Heart left ventricle (tissue), 16 donors: ENCODE measurements at regions of chr2 and their contacts with region 1.

Region 1: DNA sequence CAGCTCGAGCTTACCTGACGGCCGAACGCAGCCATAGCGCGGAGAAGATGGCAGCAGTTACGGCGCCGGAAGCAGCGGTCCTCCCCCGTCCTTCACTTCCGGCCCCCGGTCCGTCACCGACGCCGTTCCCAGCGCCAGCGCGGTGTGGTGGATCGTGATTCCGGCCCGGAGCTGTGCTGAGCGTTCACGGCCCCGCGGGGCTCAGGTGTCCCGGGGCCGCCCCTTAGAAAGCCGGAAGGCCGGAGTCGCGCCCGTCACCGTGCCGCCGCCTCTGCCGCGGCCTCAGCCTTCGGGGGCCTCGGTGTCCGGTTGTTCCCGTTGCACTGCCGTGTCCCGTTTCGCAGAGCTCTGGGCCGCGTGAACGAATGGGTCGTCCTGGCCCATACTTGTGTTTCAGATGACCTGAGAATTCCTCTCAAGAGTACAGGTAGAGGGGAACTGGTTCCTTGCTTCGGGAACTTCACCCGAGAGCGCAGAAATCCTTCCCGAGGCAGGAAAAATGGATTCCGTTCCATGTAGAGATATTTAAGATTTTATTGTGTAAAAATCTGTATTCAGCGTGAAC is at the start of gene MTERF4:
- DNase-seq: peak; percentile 87 to 94 (median 90)
- ATAC-seq: peak; percentile 97 to 100 (median 99)
- H3K4me3 ChIP-seq: peak within 1 kb of the TSS; percentile 59 to 99 (median 86)
- H3K27ac ChIP-seq: peak within 1 kb of the TSS; percentile 68 to 92 (median 85)
- H3K4me1 ChIP-seq: peaks cover 5 to 26% (median 18%) of the 10 kb centered on the region in 12 donors
- H3K27me3 ChIP-seq: no peaks in the 10 kb centered on the region
- CTCF ChIP-seq: peak in 1 of 12 donors; percentile 5
- POLR2A ChIP-seq: no peak
- total RNA-seq, gene MTERF4: 16.4 to 29.1 (median 22.3) TPM

Region 2: GRCh38 chr2:240933048-240933965 is 169.0 kb before region 1 on chr2:
- intact Hi-C with region 1: no loop called
- DNase-seq: peak; percentile 5 to 58 (median 19)
- ATAC-seq: no peak
- H3K4me3 ChIP-seq: no peak overlapping the region
- H3K27ac ChIP-seq: no peak overlapping the region
- H3K4me1 ChIP-seq: no peaks in the 10 kb centered on the region
- H3K27me3 ChIP-seq: peaks cover 0 to 4% (median 0%) of the 10 kb centered on the region in 9 donors
- CTCF ChIP-seq: no peak
- POLR2A ChIP-seq: no peak

Region 3: DNA sequence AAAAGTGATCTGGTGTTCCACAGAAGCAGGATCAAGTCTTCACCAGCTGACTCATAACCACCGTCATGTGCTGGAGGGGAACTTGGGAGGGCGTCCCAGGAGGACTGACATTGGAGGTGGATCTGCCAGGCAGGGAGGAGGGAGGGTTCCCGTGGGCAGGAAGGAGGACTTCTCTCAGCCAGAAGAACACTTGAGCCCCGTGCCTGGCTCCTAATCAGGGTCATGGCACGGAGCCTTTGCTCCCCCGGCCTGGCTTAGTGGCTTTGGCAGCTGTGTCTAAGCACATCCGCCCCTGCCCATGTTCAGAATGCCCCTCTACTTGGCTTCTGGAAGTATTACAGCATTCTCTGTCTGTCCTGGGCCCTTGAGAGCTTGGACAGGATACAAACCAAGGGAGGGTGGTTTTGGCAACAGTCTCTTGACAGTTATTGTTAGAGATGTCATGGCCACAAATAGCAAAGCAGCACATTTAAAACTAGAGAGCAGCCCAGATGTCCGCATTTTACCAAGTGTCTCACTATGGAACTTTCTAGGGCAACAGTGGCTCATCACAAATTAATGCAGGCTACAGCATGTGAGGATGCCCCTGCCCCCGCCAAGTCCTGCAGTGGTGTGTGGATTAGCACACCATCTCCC is 59.4 kb after region 1 on chr2:
- intact Hi-C with region 1: loop called in 1 of 10 experiments (anchors 5 kb)
- DNase-seq: peak; percentile 79 to 90 (median 83)
- ATAC-seq: peak; percentile 94 to 96 (median 96)
- H3K4me3 ChIP-seq: no peak overlapping the region
- H3K27ac ChIP-seq: peak overlapping the region; percentile 14 to 88 (median 78)
- H3K4me1 ChIP-seq: peaks cover 0 to 26% (median 18%) of the 10 kb centered on the region in 12 donors
- H3K27me3 ChIP-seq: no peaks in the 10 kb centered on the region
- CTCF ChIP-seq: peak in 1 of 12 donors; percentile 12
- POLR2A ChIP-seq: no peak

Region 4: GRCh38 chr2:241217320-241218031 is 115.2 kb after region 1 on chr2:
- intact Hi-C with region 1: loop called in 3 of 10 experiments (anchors 1 to 10 kb)
- DNase-seq: peak; percentile 69 to 81 (median 73)
- ATAC-seq: peak; percentile 30 to 85 (median 84)
- H3K4me3 ChIP-seq: peak overlapping the region; percentile 14 to 93 (median 60)
- H3K27ac ChIP-seq: peak overlapping the region in 11 of 12 donors; percentile 26 to 89 (median 83)
- H3K4me1 ChIP-seq: peaks cover 0 to 17% (median 10%) of the 10 kb centered on the region in 12 donors
- H3K27me3 ChIP-seq: no peaks in the 10 kb centered on the region
- CTCF ChIP-seq: peak in 2 of 12 donors; percentile 14 to 18
- POLR2A ChIP-seq: no peak